Activated CD4-positive, alpha-beta memory T cell treated with anti-CD3 and anti-CD28 coated beads, Interleukin-2, amount 10 ng/mL, durations not matched to agents 7 days and 5 days (primary cell): ENCODE measurements at regions of chr7 and their contacts with region 1.

Region 1: DNA sequence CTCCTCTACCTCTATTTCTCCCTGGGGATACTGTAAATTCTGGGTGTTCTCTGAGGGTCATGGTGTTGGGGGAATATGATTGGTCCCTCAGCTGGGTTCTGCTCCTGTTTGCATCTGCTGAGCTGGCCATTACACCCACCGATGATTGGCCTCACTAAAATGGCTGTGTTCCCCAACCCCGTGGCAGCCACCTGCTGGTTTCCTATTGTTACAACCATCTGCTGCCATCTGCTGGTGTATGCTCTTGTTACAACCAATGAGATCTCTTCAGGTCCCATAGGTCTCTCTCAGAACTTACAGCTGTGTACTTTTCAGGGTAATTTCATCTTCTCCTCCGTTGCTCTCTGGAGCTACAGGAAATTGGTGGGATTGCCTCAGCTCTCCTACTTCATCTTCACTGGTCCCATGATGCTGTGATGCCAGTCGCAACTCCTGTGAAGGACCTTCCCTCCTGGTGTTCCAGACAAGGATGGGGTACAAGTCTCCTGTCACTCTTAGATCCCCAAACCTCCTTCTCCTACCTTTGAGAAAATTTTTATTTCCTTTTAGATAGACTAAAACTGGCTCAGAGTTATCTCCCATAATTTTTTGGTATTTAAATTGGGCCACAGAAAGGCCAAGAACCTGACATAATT is 303.5 kb upstream of the SMIM30 start:
- DNase-seq: peak; percentile 74
- H3K4me3 Mint-ChIP-seq: no peak overlapping the region
- H3K27ac Mint-ChIP-seq: no peak overlapping the region
- H3K4me1 Mint-ChIP-seq: peaks cover 3% of the 10 kb centered on the region
- H3K27me3 Mint-ChIP-seq: peaks cover 2% of the 10 kb centered on the region

Region 2: DNA sequence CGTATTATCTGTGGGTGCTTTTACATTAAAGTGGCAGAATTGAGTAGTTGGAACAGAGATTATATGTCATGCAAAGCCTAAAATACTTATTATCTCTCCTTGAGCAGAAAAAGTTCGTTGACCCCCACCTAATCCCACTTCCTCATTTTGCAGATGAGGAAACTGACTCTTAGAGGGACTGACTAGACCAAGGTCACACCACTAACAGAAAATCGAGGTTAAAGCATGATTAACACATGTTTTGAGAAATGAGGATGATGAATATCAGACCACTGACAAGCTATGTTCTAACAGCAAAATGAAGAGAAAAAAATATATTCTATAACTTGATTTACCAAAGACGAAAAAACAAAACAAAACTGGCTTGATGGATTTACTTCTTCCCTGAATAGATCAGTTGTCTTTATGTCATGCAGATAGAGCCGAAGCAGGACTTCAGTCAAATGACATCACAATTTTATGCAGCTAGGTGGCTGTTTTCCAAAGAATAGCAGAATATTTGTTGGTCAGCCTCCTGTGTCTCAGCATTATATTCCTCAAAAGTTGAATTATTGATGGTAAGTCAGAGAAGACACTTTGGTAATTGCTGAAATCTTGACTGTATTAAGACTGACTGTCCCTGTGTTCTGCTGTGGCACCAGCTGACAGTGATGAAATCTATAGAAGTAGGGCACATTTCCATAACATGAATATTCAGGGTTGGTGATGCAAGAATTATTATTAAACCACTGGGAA is 279.3 kb before region 1 on chr7:
- CTCF ChIA-PET with region 1: no interaction called
- POLR2A ChIA-PET with region 1: no interaction called
- DNase-seq: no peak
- H3K4me3 Mint-ChIP-seq: no peak overlapping the region
- H3K27ac Mint-ChIP-seq: no peak overlapping the region
- H3K4me1 Mint-ChIP-seq: no peaks in the 10 kb centered on the region
- H3K27me3 Mint-ChIP-seq: peaks cover 4% of the 10 kb centered on the region

Region 3: DNA sequence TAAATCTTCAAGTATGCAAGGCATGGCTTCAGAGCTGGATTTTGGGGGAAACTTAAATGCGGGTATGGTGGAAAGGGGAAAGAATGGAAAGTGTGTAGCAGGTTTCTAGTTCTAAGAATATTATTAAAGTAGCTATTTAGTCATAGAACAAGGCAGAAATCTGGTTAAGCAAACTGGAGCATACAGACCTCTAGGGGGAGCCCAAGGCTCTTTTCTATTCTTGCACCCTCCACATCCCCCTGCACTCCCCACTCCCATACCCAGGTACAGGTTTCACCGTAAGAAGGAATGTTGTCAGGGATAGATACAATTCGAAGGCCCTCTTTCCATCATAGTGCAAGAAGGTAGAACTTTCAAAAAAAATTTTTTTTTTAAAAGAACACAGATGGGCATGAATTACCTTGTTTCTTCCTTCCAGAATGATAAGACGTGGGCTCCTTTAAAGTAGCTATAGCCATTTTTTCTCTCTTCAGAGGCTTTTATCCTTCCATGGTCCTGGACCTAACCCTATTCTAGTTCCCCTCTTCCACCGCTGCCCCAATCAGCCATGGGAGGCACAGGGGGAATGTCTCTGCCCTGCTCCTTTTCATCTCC is 262.0 kb before region 1 on chr7:
- CTCF ChIA-PET with region 1: interaction called, 13 read pairs
- POLR2A ChIA-PET with region 1: no interaction called
- DNase-seq: no peak
- H3K4me3 Mint-ChIP-seq: no peak overlapping the region
- H3K27ac Mint-ChIP-seq: no peak overlapping the region
- H3K4me1 Mint-ChIP-seq: no peaks in the 10 kb centered on the region
- H3K27me3 Mint-ChIP-seq: no peaks in the 10 kb centered on the region